Common myeloid progenitor, CD34-positive (primary cell): ENCODE measurements at regions of chr7 and their contacts with region 1.

Region 1: GRCh38 chr7:121298831-121299239 is 30.0 kb upstream of the WNT16 start:
- DNase-seq: no peak
- H3K4me3 ChIP-seq: no peak overlapping the region
- H3K27ac ChIP-seq: no peak overlapping the region
- H3K4me1 ChIP-seq: no peaks in the 10 kb centered on the region
- H3K27me3 ChIP-seq: peaks cover 0 to 1% (median 0%) of the 10 kb centered on the region in 5 experiments

Region 2: DNA sequence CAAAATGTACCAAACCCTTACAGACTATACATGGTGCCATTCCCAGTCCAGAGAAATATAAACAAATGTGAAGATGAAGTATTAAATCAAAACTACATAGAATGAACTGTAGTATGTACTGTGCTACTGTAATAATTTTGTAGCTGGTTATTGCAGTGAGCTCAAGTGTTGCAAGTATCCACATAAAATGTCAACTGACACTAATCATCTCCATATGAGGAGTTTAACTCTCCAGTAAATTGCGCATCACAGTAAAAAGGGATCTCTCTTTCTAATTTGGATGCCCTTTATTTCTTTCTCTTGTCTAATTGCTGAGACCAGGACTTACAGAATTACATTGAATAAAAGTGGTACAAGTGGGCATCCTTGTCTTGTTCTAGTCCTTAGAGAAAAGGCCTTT is 144.8 kb before region 1 on chr7:
- CTCF ChIA-PET with region 1: no interaction called
- POLR2A ChIA-PET with region 1: no interaction called
- DNase-seq: no peak
- H3K4me3 ChIP-seq: no peak overlapping the region
- H3K27ac ChIP-seq: no peak overlapping the region
- H3K4me1 ChIP-seq: no peaks in the 10 kb centered on the region
- H3K27me3 ChIP-seq: no peaks in the 10 kb centered on the region

Region 3: GRCh38 chr7:121202834-121203233 is 96.0 kb before region 1 on chr7:
- CTCF ChIA-PET with region 1: no interaction called
- POLR2A ChIA-PET with region 1: interaction called, 10 read pairs
- DNase-seq: no peak
- H3K4me3 ChIP-seq: no peak overlapping the region
- H3K27ac ChIP-seq: no peak overlapping the region
- H3K4me1 ChIP-seq: no peaks in the 10 kb centered on the region
- H3K27me3 ChIP-seq: no peaks in the 10 kb centered on the region

Region 4: GRCh38 chr7:121244120-121244870 is 54.5 kb before region 1 on chr7:
- CTCF ChIA-PET with region 1: no interaction called
- POLR2A ChIA-PET with region 1: no interaction called
- DNase-seq: peak in 2 of 3 donors; percentile 4 to 18
- H3K4me3 ChIP-seq: no peak overlapping the region
- H3K27ac ChIP-seq: no peak overlapping the region
- H3K4me1 ChIP-seq: peaks cover 0 to 3% (median 0%) of the 10 kb centered on the region in 4 experiments
- H3K27me3 ChIP-seq: no peaks in the 10 kb centered on the region

Region 5: GRCh38 chr7:121385800-121386179 is 87.0 kb after region 1 on chr7:
- CTCF ChIA-PET with region 1: no interaction called
- POLR2A ChIA-PET with region 1: no interaction called
- DNase-seq: peak in 2 of 3 donors; percentile 85 to 92
- H3K4me3 ChIP-seq: no peak overlapping the region
- H3K27ac ChIP-seq: no peak overlapping the region
- H3K4me1 ChIP-seq: peaks cover 5 to 54% (median 20%) of the 10 kb centered on the region in 4 experiments
- H3K27me3 ChIP-seq: no peaks in the 10 kb centered on the region